CD4-positive, alpha-beta memory T cell (primary cell): ENCODE measurements at regions of chr9 and their contacts with region 1.

Region 1: GRCh38 chr9:127980706-127981558 is at the start of gene EEIG1:
- DNase-seq: peak; percentile 96 to 99 (median 97)
- H3K4me3 ChIP-seq: peak within 1 kb of the TSS; percentile 72 to 92
- H3K4me3 Mint-ChIP-seq: peak within 1 kb of the TSS; percentile 94 to 98 (median 97)
- H3K27ac ChIP-seq: peak within 1 kb of the TSS; percentile 78
- H3K27ac Mint-ChIP-seq: peak within 1 kb of the TSS; percentile 92 to 97 (median 94)
- H3K4me1 ChIP-seq: peaks cover 46% of the 10 kb centered on the region
- H3K4me1 Mint-ChIP-seq: peaks cover 27 to 51% (median 38%) of the 10 kb centered on the region in 4 donors
- H3K27me3 ChIP-seq: no peaks in the 10 kb centered on the region
- H3K27me3 Mint-ChIP-seq: no peaks in the 10 kb centered on the region
- total RNA-seq, gene EEIG1: 516 to 550 TPM

Region 2: DNA sequence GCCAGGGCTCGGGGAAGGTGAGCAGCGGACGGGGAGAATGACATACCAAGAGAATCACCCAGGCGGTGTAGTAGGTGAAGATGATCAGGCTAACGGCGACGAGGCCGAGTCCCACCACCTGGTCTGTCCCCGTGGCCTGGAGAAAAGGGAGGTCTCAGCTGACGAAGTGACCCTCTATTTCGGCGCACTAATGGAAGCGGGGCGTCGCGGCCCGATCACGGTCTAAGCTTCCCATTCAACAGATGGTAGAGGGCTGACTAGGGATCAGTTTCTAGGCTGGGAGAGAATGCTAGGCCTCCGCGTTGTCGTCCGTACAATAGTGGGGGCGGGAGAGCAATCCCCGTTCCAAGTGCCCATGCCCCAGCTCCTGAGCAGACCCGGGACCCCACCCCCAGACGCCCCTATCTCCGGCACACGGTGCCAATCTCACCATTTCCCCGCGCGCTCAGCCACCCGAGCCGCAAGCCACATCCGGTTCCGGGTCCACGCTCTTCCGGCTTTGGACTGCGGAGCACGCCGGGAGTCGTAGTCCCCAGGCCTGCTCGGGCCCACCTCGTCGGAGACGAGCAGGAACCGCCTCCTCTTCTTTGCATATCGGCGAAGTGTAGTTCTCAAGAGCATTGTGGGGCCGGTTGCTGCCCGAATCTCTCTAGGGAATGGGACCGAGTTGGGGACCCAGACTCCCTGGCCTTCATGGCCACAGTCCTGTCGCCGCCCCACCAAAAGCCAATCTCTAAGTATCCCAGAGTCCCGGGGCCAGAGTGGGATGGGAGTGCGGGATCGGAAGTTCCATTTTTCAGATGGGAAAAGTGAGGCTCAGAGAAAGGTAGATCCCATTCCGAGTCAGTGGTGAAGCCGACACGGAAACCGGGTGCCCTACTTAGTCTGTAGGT is 43.3 kb before region 1 on chr9 and contains the start of gene DPM2:
- CTCF ChIA-PET with region 1: interaction called, 35 read pairs
- POLR2A ChIA-PET with region 1: interaction called, 250 read pairs
- intact Hi-C with region 1: no loop called
- DNase-seq: peak; percentile 85 to 89 (median 87)
- H3K4me3 ChIP-seq: peak within 1 kb of the TSS; percentile 37 to 73
- H3K4me3 Mint-ChIP-seq: peak within 1 kb of the TSS; percentile 88 to 98 (median 91)
- H3K27ac ChIP-seq: peak within 1 kb of the TSS; percentile 75
- H3K27ac Mint-ChIP-seq: peak within 1 kb of the TSS; percentile 89 to 97 (median 97)
- H3K4me1 ChIP-seq: peaks cover 37% of the 10 kb centered on the region
- H3K4me1 Mint-ChIP-seq: peaks cover 23 to 53% (median 41%) of the 10 kb centered on the region in 4 donors
- H3K27me3 ChIP-seq: no peaks in the 10 kb centered on the region
- H3K27me3 Mint-ChIP-seq: no peaks in the 10 kb centered on the region
- total RNA-seq, gene DPM2: 37.0 to 39.7 TPM

Region 3: DNA sequence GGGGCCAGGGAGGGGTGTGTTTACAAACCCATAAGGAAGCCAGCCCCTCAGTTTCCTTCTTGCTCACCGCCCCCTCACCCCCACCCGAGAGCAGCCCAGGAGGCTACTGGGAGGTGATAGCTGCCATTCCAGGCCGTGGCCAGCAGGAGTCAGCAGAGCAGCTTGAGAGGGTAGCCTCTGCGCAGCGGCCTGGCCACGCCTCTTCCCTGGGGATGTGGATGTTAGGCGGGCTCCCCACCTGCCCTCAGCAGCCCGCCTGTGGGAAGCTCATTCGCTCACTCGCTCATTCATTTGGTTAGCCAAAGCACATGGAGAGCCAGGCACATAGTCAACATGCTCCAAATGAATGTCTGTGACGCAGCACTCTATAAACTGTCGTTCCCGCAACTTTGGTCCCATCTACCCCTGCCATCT is 37.2 kb before region 1 on chr9:
- CTCF ChIA-PET with region 1: interaction called, 35 read pairs
- POLR2A ChIA-PET with region 1: interaction called, 250 read pairs
- intact Hi-C with region 1: loop called (anchors 1 kb)
- DNase-seq: peak; percentile 66 to 76 (median 72)
- H3K4me3 ChIP-seq: no peak overlapping the region
- H3K4me3 Mint-ChIP-seq: no peak overlapping the region
- H3K27ac ChIP-seq: no peak overlapping the region
- H3K27ac Mint-ChIP-seq: peak overlapping the region; percentile 78 to 93 (median 88)
- H3K4me1 ChIP-seq: peaks cover 30% of the 10 kb centered on the region
- H3K4me1 Mint-ChIP-seq: peaks cover 16 to 50% (median 23%) of the 10 kb centered on the region in 4 donors
- H3K27me3 ChIP-seq: no peaks in the 10 kb centered on the region
- H3K27me3 Mint-ChIP-seq: no peaks in the 10 kb centered on the region

Region 4: GRCh38 chr9:127970401-127971313 is 10.3 kb before region 1 on chr9:
- CTCF ChIA-PET with region 1: interaction called, 3 read pairs
- POLR2A ChIA-PET with region 1: interaction called, 482 read pairs
- intact Hi-C with region 1: loop called (anchors 1 kb)
- DNase-seq: peak; percentile 72 to 89 (median 73)
- H3K4me3 ChIP-seq: peak overlapping the region; percentile 61 to 76
- H3K4me3 Mint-ChIP-seq: peak overlapping the region; percentile 78 to 98 (median 93)
- H3K27ac ChIP-seq: peak overlapping the region; percentile 78
- H3K27ac Mint-ChIP-seq: peak overlapping the region; percentile 81 to 99 (median 97)
- H3K4me1 ChIP-seq: peaks cover 100% of the 10 kb centered on the region
- H3K4me1 Mint-ChIP-seq: peaks cover 73 to 100% (median 87%) of the 10 kb centered on the region in 4 donors
- H3K27me3 ChIP-seq: no peaks in the 10 kb centered on the region
- H3K27me3 Mint-ChIP-seq: no peaks in the 10 kb centered on the region

Region 5: DNA sequence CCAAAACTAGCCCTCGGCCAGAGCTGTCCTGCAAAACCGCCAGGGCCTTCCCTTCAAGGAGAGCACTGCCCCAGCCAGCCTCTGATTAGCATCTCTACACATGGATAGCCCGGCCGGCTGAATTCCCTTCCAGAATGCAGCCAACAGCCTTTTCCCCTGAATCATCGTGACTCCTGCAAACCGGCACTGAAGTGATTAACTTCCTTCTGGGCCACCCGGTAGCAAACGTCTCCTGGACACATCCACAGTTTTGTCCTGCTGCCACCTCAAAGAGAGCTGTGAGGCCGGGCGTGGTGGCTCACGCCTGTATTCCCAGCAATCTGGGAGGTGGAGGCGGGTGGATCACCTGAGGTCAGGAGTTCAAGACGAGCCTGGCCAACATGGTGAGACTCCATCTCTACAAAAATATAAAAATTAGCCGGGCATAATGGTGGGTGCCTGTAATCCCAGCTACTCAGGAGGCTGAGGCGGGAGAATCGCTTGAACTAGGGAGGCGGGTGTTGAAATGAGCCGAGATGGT is 20.9 kb after region 1 on chr9:
- CTCF ChIA-PET with region 1: interaction called, 5 read pairs
- POLR2A ChIA-PET with region 1: interaction called, 294 read pairs
- intact Hi-C with region 1: loop called (anchors 1 kb)
- DNase-seq: no peak
- H3K4me3 ChIP-seq: no peak overlapping the region
- H3K4me3 Mint-ChIP-seq: no peak overlapping the region
- H3K27ac ChIP-seq: no peak overlapping the region
- H3K27ac Mint-ChIP-seq: peak overlapping the region in 3 of 7 donors; percentile 19 to 68 (median 65)
- H3K4me1 ChIP-seq: peaks cover 37% of the 10 kb centered on the region
- H3K4me1 Mint-ChIP-seq: peaks cover 13 to 50% (median 32%) of the 10 kb centered on the region in 4 donors
- H3K27me3 ChIP-seq: no peaks in the 10 kb centered on the region
- H3K27me3 Mint-ChIP-seq: no peaks in the 10 kb centered on the region

Region 6: GRCh38 chr9:128007566-128008138 is 26.7 kb after region 1 on chr9:
- CTCF ChIA-PET with region 1: interaction called, 5 read pairs
- POLR2A ChIA-PET with region 1: interaction called, 294 read pairs
- intact Hi-C with region 1: loop called (anchors 1 kb)
- DNase-seq: peak; percentile 90 to 97 (median 92)
- H3K4me3 ChIP-seq: peak overlapping the region in 1 of 2 donors; percentile 29
- H3K4me3 Mint-ChIP-seq: peak overlapping the region; percentile 75 to 93 (median 82)
- H3K27ac ChIP-seq: peak overlapping the region; percentile 46
- H3K27ac Mint-ChIP-seq: peak overlapping the region; percentile 94 to 100 (median 97)
- H3K4me1 ChIP-seq: peaks cover 79% of the 10 kb centered on the region
- H3K4me1 Mint-ChIP-seq: peaks cover 33 to 90% (median 61%) of the 10 kb centered on the region in 4 donors
- H3K27me3 ChIP-seq: no peaks in the 10 kb centered on the region
- H3K27me3 Mint-ChIP-seq: no peaks in the 10 kb centered on the region

Region 7: DNA sequence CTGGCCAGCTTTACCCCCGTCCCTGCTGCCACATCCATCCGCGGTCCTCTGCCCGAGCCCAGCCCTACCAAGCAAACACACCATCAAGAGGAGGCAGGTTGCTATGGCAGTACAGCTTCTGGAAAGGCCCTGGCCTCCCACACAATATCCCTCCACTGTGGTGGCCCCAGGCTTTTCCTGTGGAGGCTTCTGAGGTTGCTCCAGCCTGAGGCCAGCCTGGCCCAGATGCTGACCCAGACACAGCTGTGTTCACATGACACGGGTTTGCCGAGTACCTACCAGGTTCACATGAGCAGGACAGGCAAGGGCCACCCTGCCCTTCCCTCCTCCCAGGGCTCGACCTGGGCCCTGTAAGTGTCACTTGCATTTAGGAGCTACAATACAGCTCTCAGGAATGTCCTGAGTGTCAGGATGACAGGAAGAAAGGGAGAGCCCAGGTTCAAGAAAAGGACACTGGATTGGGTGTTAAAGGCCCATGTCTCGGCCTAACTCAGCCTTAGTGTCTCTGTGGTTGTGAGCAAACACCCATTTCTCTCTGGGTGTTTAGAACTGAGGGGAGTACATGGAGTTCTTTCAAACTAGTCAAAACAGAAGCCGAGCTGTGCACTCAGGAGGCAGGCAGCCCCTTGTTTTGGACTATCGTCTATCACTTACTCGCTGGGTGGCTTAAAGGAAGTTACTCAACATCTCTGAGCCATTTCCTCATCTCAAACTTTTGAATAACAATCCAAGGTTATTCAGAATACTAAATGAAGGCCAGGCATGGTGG is 46.0 kb after region 1 on chr9:
- CTCF ChIA-PET with region 1: interaction called, 182 read pairs
- POLR2A ChIA-PET with region 1: interaction called, 1,317 read pairs
- intact Hi-C with region 1: loop called (anchors 1 kb)
- DNase-seq: peak in 4 of 5 donors; percentile 50 to 75 (median 54)
- H3K4me3 ChIP-seq: peak overlapping the region; percentile 0 to 25
- H3K4me3 Mint-ChIP-seq: peak overlapping the region; percentile 74 to 89 (median 82)
- H3K27ac ChIP-seq: peak overlapping the region; percentile 80
- H3K27ac Mint-ChIP-seq: peak overlapping the region; percentile 98 to 100 (median 99)
- H3K4me1 ChIP-seq: peaks cover 100% of the 10 kb centered on the region
- H3K4me1 Mint-ChIP-seq: peaks cover 54 to 94% (median 78%) of the 10 kb centered on the region in 4 donors
- H3K27me3 ChIP-seq: no peaks in the 10 kb centered on the region
- H3K27me3 Mint-ChIP-seq: no peaks in the 10 kb centered on the region

Region 8: DNA sequence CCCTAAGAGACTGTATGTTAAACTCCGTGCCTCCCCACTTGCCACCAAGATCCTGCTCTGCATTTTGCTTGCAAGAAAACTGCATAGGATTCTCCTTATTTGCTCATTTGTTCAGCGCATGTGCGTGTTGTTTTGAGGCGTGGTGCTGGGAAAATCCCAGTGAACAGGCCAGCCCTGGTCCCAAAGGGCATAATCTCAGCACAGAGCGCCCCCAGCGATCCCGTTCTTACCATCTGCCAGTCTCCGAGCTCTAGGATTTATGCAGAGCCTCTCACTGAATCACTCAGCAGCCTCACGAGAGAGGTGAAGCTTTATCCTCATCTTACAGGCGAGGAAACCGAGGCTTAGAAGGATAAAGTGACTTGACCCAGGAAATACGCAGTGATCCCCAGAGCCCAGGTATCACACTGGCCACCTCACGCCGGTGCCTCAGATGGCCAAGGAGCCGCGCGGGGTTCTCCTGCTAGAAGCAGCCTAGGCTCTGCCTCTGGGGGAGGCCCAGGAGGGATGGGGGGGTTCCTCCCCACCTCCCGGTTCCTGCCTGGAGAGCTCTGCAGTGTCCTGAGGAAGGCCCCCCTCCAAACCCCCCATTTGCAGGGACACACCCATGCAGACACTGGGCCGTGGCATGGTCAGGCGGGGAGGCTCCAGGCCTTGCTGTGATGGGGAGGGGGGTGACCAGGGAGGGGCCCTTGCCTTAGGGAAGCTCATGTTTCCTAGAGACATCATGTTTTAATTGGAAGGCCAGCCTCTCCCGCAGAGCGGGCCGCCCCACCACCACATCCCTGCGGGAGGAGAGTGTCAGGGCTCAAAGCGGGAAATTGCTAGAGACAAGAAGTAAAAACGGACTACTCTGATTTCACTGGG is 1696.3 kb after region 1 on chr9:
- CTCF ChIA-PET with region 1: no interaction called
- POLR2A ChIA-PET with region 1: no interaction called
- intact Hi-C with region 1: no loop called
- DNase-seq: no peak
- H3K4me3 ChIP-seq: no peak overlapping the region
- H3K4me3 Mint-ChIP-seq: no peak overlapping the region
- H3K27ac ChIP-seq: no peak overlapping the region
- H3K27ac Mint-ChIP-seq: no peak overlapping the region
- H3K4me1 ChIP-seq: no peaks in the 10 kb centered on the region
- H3K4me1 Mint-ChIP-seq: no peaks in the 10 kb centered on the region
- H3K27me3 ChIP-seq: no peaks in the 10 kb centered on the region
- H3K27me3 Mint-ChIP-seq: peaks cover 7 to 22% of the 10 kb centered on the region in 2 donors